ENCODE measurements at regions of chr10 and their contacts with region 1.

Region 1: GRCh38 chr10:122388287-122388997 is 13.9 kb downstream of the PLEKHA1 start:
- DNase-seq: peak; percentile 2
- ATAC-seq: no peak
- H3K4me3 ChIP-seq: no peak overlapping the region
- H3K27ac ChIP-seq: no peak overlapping the region
- H3K4me1 ChIP-seq: peaks cover 12% of the 10 kb centered on the region; the same call in 1 of the 2 replicates
- H3K27me3 ChIP-seq: no peaks in the 10 kb centered on the region
- CTCF ChIP-seq: no peak

Region 2: DNA sequence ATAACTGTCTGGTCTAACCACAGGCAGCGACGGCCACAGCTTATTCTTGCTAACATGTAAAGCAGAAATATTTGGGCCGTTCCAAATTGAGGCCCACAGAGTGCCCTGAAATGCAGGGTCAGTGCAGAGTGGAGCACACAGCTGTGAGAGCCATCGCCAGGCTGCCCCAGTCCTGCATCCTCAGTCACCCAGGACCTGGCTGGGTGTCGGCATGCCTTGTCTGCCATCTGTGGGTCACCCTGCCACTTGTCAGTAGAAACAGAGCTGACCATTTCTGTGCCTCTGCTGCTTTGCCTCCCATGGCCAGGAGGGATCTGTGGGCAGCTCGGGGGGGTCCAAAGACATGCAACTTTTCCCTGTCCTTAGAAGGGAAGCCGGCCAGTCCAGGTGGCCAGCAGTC is 174.7 kb before region 1 on chr10:
- CTCF ChIA-PET with region 1: no interaction called
- POLR2A ChIA-PET with region 1: no interaction called
- intact Hi-C with region 1: no loop called
- DNase-seq: no peak
- ATAC-seq: no peak
- H3K4me3 ChIP-seq: no peak overlapping the region
- H3K27ac ChIP-seq: no peak overlapping the region
- H3K4me1 ChIP-seq: no peaks in the 10 kb centered on the region
- H3K27me3 ChIP-seq: no peaks in the 10 kb centered on the region
- CTCF ChIP-seq: no peak

Region 3: DNA sequence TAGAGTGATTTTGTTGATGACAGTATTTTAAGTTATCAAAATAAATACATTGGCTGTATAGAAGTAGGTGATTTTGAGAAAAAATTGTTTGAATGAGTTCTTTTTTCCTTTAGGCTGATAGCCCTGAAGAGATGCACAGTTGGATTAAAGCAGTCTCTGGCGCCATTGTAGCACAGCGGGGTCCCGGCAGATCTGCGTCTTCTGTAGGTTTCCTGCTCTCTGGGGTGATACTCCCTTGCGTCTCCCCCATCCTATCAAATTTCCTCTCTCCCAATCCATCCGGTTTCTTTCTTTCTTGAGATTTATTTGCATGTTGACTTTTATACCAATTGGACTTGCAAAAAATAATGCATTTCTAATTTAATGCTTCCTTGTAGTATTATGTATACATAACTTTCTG is 38.4 kb after region 1 on chr10:
- CTCF ChIA-PET with region 1: no interaction called
- POLR2A ChIA-PET with region 1: no interaction called
- intact Hi-C with region 1: loop called (anchors 5 kb)
- DNase-seq: no peak
- ATAC-seq: no peak
- H3K4me3 ChIP-seq: no peak overlapping the region
- H3K27ac ChIP-seq: no peak overlapping the region
- H3K4me1 ChIP-seq: no peaks in the 10 kb centered on the region
- H3K27me3 ChIP-seq: no peaks in the 10 kb centered on the region
- CTCF ChIP-seq: no peak

Measured in PC-3 (cell line).